ENCODE measurements at regions of chr15 and their contacts with region 1.

Region 1: DNA sequence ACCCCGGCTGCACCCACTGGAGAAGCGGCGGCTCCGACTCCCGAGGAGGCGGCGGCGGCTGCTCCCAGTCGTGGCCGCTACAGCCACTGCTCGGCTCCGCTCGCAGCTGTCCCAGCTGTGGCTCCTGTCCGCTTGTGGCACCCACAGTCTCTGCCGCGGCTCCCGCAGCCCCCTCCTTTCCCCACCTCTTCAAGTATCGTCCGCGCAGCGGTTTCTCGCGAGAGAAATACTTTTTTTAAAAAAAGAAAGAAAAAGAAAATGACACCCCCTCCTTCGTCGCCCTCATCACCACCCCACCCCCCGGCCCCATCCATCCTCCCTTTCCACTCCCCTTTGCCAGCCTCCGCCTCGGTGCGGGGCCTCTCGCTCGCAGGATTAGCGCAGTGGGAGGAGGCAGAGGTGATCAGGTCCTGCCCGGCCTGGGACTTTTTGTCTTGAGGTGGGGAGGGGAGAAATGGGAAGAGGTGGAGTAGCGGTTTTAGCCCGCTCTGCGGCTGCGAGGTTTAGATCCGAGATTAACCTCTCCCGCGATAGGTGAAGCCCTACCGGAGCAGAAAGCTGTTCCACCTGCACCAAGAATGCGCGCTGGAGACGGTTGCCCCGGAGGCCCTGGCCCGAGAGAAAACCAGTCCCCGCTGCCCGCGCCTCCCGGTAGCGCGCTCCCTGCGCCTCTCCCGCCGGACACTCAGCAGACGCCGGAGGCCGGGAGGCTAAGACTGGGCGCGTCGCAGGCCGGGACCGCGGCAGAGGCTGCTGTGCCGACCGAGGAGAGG is at the start of gene FBN1:
- DNase-seq: peak; percentile 89
- ATAC-seq: peak; percentile 92
- total RNA-seq, gene FBN1: 135 TPM

Region 2: DNA sequence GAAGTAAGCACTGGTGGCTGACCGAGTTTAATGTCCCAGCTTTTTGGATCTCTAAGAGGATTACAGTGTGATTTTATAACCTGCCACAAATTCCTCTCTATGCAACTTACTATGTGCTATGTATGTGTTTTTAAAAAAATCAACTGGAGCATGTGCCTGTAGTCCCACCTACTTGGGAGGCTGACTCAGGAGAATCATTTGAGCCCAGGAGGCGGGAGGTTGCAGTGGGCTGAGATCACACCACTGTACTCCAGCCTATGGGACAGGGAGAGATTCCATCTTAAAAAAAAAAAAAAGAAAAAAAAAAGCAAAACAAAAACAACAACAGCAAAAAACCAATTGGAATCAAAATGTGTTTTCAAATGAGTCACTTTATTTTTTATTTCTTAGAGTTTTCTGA is 284.9 kb before region 1 on chr15:
- intact Hi-C with region 1: loop called (anchors 10 kb)
- DNase-seq: no peak
- ATAC-seq: no peak

Region 3: DNA sequence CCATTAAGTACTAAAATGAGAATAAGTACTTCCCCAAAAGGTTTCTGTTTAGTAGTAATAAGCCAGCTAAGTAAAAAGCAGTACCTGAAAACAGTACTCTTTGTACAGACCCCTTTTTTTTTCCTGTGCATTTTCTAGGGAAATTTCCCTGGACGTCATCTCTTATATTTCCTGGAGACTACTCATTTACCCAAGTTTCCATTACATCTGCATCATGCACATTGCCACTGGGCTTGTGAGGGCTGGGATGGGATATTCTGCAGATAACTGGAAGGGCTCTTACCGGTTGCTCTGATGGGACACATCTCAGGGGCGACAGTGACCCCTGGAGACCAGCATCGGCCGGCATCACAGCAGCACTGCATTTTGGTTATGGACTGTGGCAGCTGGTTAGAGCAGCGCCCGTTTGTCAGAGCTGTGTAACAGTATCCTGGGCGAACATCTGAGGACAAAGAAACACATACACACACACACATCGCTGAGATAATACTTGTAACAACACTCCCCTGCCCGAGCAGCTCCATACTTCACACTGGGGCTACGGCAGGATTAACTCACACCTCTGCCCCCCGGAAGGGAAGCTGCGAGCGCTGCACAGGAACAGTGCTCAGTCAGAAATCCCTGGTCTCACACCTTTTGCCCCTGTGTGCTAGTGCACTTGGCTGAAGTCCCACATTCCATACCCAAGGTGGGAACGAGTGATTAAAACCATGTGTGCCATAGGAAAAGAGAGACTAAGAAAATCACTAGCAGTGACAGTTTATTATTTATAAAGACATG is 125.2 kb before region 1 on chr15:
- intact Hi-C with region 1: loop called (anchors 10 kb)
- DNase-seq: no peak
- ATAC-seq: peak; percentile 37